BJ (cell line): ENCODE measurements at regions of chr3 and their contacts with region 1.

Region 1: DNA sequence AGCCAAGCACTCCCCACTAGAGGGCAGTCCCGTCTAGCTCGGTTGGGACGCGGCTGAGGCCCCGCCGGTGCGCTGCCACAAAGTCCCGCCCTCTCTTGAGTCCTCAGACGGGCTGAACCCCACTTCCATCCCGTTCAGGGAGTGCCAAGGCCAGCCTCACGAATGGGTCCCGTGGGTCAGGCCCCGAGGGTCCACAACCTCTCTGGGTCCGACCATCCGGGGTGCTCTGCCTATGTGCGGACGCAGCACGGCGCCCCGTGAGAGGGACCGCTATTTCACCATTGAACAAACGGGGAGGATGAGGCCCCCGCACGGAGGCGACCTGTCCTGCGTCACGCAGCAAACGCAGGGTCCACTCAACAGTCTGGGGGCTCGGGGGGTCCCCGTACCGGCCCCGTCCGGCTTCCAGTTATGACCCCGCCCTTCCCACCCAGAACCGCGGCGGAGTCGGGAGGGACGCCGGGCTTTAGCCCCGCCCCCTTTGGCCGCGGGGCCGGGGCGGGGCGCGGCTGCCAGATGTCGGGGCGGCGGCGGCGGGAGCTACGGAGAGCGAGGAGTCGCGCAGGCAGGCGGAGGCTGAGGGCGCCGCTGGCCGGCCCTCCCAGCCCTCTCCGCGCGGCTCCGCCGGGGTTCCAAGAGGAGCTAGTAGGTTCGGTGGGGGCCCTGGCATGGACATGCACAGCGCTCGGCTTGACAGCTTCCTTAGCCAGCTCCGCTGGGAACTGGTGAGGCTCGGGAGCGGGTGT is at the start of gene INKA1:
- DNase-seq: no peak
- H3K4me3 ChIP-seq: peak within 1 kb of the TSS; percentile 79
- H3K27me3 ChIP-seq: no peaks in the 10 kb centered on the region
- CTCF ChIP-seq: peak; percentile 92
- polyA plus RNA-seq, gene INKA1: 3.1 and 4.4 TPM in 2 replicates

Region 2: DNA sequence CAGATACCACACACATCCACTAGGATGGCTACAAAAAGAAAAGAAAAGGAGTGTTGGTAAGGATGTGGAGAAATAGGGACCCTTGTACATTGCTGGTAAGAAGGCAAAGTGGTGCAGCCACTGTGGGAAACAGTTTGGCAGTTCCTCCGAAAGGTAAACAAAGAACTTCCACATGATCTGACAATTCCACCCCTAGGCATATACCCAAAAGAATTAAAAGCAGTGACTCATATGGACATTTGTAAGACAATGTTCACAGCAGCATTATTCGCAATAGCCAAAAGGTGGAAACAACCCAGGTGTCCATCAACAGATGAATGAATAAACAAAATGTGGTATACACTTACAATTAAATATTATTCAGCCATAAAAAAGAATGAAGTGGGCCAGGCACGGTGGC is 56.9 kb before region 1 on chr3:
- CTCF ChIA-PET with region 1: no interaction called
- POLR2A ChIA-PET with region 1: no interaction called
- DNase-seq: no peak
- H3K4me3 ChIP-seq: no peak overlapping the region
- H3K27me3 ChIP-seq: no peaks in the 10 kb centered on the region
- CTCF ChIP-seq: no peak

Region 3: GRCh38 chr3:49786241-49786958 is 16.5 kb before region 1 on chr3 and contains the start of gene IP6K1:
- CTCF ChIA-PET with region 1: interaction called, 13 read pairs
- POLR2A ChIA-PET with region 1: interaction called, 8 read pairs
- DNase-seq: peak; percentile 99
- H3K4me3 ChIP-seq: peak within 1 kb of the TSS; percentile 85
- H3K27me3 ChIP-seq: no peaks in the 10 kb centered on the region
- CTCF ChIP-seq: no peak
- polyA plus RNA-seq, gene IP6K1: 35.8 and 54.4 TPM in 2 replicates

Region 4: GRCh38 chr3:49826016-49826415 is 23.1 kb after region 1 on chr3:
- CTCF ChIA-PET with region 1: interaction called, 11 read pairs
- POLR2A ChIA-PET with region 1: no interaction called
- DNase-seq: no peak
- H3K4me3 ChIP-seq: no peak overlapping the region
- H3K27me3 ChIP-seq: no peaks in the 10 kb centered on the region
- CTCF ChIP-seq: no peak

Region 5: GRCh38 chr3:49844464-49845183 is 41.7 kb after region 1 on chr3:
- CTCF ChIA-PET with region 1: interaction called, 287 read pairs
- POLR2A ChIA-PET with region 1: no interaction called
- DNase-seq: no peak
- H3K4me3 ChIP-seq: no peak overlapping the region
- H3K27me3 ChIP-seq: no peaks in the 10 kb centered on the region
- CTCF ChIP-seq: no peak

Region 6: GRCh38 chr3:50278868-50279224 is 476.0 kb after region 1 on chr3 and contains the start of gene LSMEM2:
- CTCF ChIA-PET with region 1: interaction called, 4 read pairs
- POLR2A ChIA-PET with region 1: interaction called, 15 read pairs
- DNase-seq: no peak
- H3K4me3 ChIP-seq: no peak within 1 kb of the TSS
- H3K27me3 ChIP-seq: no peaks in the 10 kb centered on the region
- CTCF ChIP-seq: no peak
- polyA plus RNA-seq, gene LSMEM2: not detected in 2 replicates